Endothelial cell of umbilical vein (primary cell): ENCODE measurements at regions of chr13 and their contacts with region 1.

Region 1: GRCh38 chr13:71240911-71241310 is 626.1 kb downstream of the DACH1 start:
- DNase-seq: peak; percentile 68
- H3K4me3 ChIP-seq: no peak overlapping the region
- H3K27ac ChIP-seq: no peak overlapping the region
- H3K4me1 ChIP-seq: peaks cover 14% of the 10 kb centered on the region
- H3K27me3 ChIP-seq: no peaks in the 10 kb centered on the region
- CTCF ChIP-seq: peak; percentile 36 to 56
- POLR2A ChIP-seq: no peak

Region 2: GRCh38 chr13:71252184-71252704 is 11.3 kb after region 1 on chr13:
- CTCF ChIA-PET with region 1: interaction called, 19 read pairs
- POLR2A ChIA-PET with region 1: no interaction called
- dilution Hi-C with region 1: no loop called
- intact Hi-C with region 1: loop called (anchors 1 kb)
- DNase-seq: peak; percentile 86
- H3K4me3 ChIP-seq: peak overlapping the region in 1 of 3 experiments; percentile 8
- H3K27ac ChIP-seq: peak overlapping the region; percentile 48
- H3K4me1 ChIP-seq: peaks cover 31% of the 10 kb centered on the region
- H3K27me3 ChIP-seq: no peaks in the 10 kb centered on the region
- CTCF ChIP-seq: no peak
- POLR2A ChIP-seq: no peak

Region 3: GRCh38 chr13:71477735-71478134 is 236.8 kb after region 1 on chr13:
- CTCF ChIA-PET with region 1: no interaction called
- POLR2A ChIA-PET with region 1: no interaction called
- dilution Hi-C with region 1: no loop called
- intact Hi-C with region 1: loop called (anchors 5 kb)
- DNase-seq: no peak
- H3K4me3 ChIP-seq: no peak overlapping the region
- H3K27ac ChIP-seq: no peak overlapping the region
- H3K4me1 ChIP-seq: no peaks in the 10 kb centered on the region
- H3K27me3 ChIP-seq: no peaks in the 10 kb centered on the region
- CTCF ChIP-seq: peak; percentile 13 to 23
- POLR2A ChIP-seq: no peak

Region 4: DNA sequence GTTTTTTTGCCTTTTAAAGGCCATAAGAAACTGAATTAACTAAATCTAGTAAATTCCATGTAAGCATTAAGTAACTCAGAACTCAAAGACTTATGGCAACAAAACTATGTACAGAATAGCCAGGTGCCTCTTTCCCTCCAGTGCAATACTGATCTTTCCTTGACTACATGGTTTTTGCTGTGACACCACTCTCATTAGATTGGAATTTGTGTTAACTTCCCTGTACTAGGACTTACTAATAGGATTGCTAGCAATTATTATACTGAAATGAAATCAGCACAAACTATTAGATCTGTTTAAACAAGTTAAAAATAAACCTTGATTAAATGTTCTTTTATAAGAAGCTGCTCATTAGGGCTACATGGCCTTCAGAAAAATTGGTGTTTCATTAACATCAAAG is 529.8 kb after region 1 on chr13:
- CTCF ChIA-PET with region 1: no interaction called
- POLR2A ChIA-PET with region 1: no interaction called
- dilution Hi-C with region 1: no loop called
- intact Hi-C with region 1: loop called (anchors 10 kb)
- DNase-seq: no peak
- H3K4me3 ChIP-seq: no peak overlapping the region
- H3K27ac ChIP-seq: no peak overlapping the region
- H3K4me1 ChIP-seq: peaks cover under 1% of the 10 kb centered on the region
- H3K27me3 ChIP-seq: no peaks in the 10 kb centered on the region
- CTCF ChIP-seq: no peak
- POLR2A ChIP-seq: no peak

Region 5: GRCh38 chr13:71979616-71980015 is 738.7 kb after region 1 on chr13:
- CTCF ChIA-PET with region 1: interaction called, 12 read pairs
- POLR2A ChIA-PET with region 1: no interaction called
- dilution Hi-C with region 1: no loop called
- intact Hi-C with region 1: no loop called
- DNase-seq: peak; percentile 33
- H3K4me3 ChIP-seq: no peak overlapping the region
- H3K27ac ChIP-seq: no peak overlapping the region
- H3K4me1 ChIP-seq: no peaks in the 10 kb centered on the region
- H3K27me3 ChIP-seq: no peaks in the 10 kb centered on the region
- CTCF ChIP-seq: peak; percentile 13 to 43
- POLR2A ChIP-seq: no peak